ENCODE measurements at regions of chr5 and their contacts with region 1.

Region 1: DNA sequence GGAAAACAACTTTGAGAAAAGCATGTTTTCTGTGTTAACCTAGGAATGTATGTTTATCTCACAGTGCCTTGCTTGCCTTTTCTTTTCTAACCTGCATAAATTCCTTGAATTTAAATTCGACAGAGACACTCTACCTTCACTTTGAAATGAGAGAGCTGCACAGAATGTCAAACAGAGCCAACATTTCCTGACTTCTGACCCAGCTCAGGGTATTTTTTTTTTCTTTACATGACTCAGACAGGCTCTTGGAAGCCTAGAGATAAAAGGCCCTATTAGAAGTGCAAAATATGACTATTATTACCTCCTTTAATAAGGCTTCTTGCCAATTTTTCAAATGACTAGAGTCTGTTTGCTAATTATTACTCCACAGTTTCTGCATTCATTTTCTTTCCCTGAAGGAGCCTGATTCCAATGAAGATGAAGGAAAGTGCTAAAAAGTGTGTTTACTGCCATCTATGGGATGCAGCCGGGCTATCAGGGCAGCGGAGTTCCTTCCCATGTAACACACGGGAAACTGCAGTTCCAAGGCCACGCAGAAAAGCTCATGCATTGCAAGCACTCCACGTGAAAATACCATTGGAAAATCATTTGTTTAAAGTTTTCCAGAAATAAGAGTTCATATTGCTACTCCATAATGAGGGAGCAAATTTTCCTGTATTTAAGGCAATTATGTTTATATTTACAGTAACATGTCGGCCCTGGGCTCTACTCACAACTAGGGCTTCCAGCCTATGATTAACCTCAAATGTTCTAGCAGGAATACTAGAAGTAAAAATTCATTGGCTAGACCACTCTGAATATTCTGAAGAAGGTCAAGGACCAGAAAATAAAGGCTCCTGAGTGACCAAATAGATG is 485.6 kb downstream of the ZSWIM6 start:
- DNase-seq: peak; percentile 31 to 82 (median 72)
- H3K4me3 ChIP-seq: peak overlapping the region in 2 of 59 donors; percentile 13 to 14
- H3K27ac ChIP-seq: peak overlapping the region in 2 of 59 donors; percentile 6 to 10
- H3K27me3 ChIP-seq: peaks cover 0 to under 1% (median 0%) of the 10 kb centered on the region in 45 donors
- CTCF ChIP-seq: peak; percentile 40 to 87 (median 74)

Region 2: GRCh38 chr5:61625681-61626621 is 191.7 kb before region 1 on chr5:
- intact Hi-C with region 1: no loop called
- DNase-seq: peak; percentile 60 to 90 (median 84)
- H3K4me3 ChIP-seq: peak overlapping the region; percentile 40 to 74 (median 59)
- H3K27ac ChIP-seq: peak overlapping the region; percentile 77 to 99 (median 96)
- H3K27me3 ChIP-seq: no peaks in the 10 kb centered on the region
- CTCF ChIP-seq: peak in 27 of 56 donors; percentile 8 to 52 (median 29)

Region 3: GRCh38 chr5:61666064-61666621 is 151.6 kb before region 1 on chr5:
- intact Hi-C with region 1: loop called (anchors 5 to 10 kb)
- DNase-seq: no peak
- H3K4me3 ChIP-seq: peak overlapping the region in 16 of 59 donors; percentile 1 to 39 (median 11)
- H3K27ac ChIP-seq: peak overlapping the region in 16 of 59 donors; percentile 2 to 57 (median 28)
- H3K27me3 ChIP-seq: no peaks in the 10 kb centered on the region
- CTCF ChIP-seq: no peak

Region 4: GRCh38 chr5:61805101-61805500 is 12.6 kb before region 1 on chr5:
- intact Hi-C with region 1: no loop called
- DNase-seq: no peak
- H3K4me3 ChIP-seq: no peak overlapping the region
- H3K27ac ChIP-seq: no peak overlapping the region
- H3K27me3 ChIP-seq: peaks cover 0 to 3% (median 0%) of the 10 kb centered on the region in 45 donors
- CTCF ChIP-seq: no peak